AG04450 (cell line): ENCODE measurements at regions of chr7 and their contacts with region 1.

Region 1: GRCh38 chr7:24812310-24812945 is 55.2 kb upstream of the GSDME start:
- DNase-seq: no peak
- H3K4me3 ChIP-seq: no peak overlapping the region
- H3K27ac ChIP-seq: no peak overlapping the region
- H3K27me3 ChIP-seq: no peaks in the 10 kb centered on the region
- CTCF ChIP-seq: peak; percentile 90

Region 2: DNA sequence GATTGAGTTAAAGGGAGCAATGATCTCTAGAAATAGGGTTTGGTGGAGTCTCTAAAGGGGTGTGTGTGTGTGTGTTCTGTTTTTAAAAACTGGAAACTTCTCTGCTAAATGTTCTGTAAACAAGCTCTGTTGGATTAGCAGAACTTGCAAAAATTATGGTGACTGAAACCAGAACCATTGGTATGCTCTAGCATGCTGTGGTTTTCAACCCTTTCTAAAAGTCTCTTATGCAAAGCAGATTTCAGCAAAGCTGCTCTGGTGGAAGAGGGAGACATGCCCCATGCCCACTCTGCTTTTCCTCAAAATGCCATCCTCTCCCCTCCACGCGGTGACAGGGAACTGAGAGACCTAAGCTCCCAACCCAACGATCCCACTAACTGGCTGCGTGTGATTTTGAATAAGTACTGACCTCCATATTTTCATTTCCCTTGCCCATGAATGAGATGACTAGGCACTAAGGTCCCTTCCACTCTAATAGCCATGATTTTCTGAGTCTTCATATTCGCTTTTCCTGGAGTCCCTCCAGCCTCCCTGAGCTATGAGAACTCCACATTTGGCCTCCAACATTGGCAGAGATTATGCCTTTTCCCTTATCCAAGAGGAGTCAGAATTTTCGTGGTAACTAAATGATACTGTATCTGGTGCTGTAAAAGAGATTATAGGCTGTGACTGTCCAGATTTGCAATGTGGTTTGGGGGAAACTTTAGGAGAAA is 356.5 kb before region 1 on chr7:
- CTCF ChIA-PET with region 1: no interaction called
- POLR2A ChIA-PET with region 1: no interaction called
- DNase-seq: no peak
- H3K4me3 ChIP-seq: no peak overlapping the region
- H3K27ac ChIP-seq: no peak overlapping the region
- H3K27me3 ChIP-seq: peaks cover 2% of the 10 kb centered on the region
- CTCF ChIP-seq: no peak

Region 3: GRCh38 chr7:24572997-24573625 is 239.3 kb before region 1 on chr7 and contains the start of gene PALS2:
- CTCF ChIA-PET with region 1: interaction called, 12 read pairs
- POLR2A ChIA-PET with region 1: no interaction called
- DNase-seq: no peak
- H3K4me3 ChIP-seq: peak within 1 kb of the TSS; percentile 74
- H3K27ac ChIP-seq: no peak within 1 kb of the TSS
- H3K27me3 ChIP-seq: peaks cover 18% of the 10 kb centered on the region
- CTCF ChIP-seq: no peak
- polyA plus RNA-seq, gene PALS2: 9.2 and 11.6 TPM in 2 replicates

Region 4: GRCh38 chr7:24764972-24765744 is 47.3 kb before region 1 on chr7:
- CTCF ChIA-PET with region 1: interaction called, 15 read pairs
- POLR2A ChIA-PET with region 1: no interaction called
- DNase-seq: no peak
- H3K4me3 ChIP-seq: no peak overlapping the region
- H3K27ac ChIP-seq: no peak overlapping the region
- H3K27me3 ChIP-seq: no peaks in the 10 kb centered on the region
- CTCF ChIP-seq: no peak

Region 5: DNA sequence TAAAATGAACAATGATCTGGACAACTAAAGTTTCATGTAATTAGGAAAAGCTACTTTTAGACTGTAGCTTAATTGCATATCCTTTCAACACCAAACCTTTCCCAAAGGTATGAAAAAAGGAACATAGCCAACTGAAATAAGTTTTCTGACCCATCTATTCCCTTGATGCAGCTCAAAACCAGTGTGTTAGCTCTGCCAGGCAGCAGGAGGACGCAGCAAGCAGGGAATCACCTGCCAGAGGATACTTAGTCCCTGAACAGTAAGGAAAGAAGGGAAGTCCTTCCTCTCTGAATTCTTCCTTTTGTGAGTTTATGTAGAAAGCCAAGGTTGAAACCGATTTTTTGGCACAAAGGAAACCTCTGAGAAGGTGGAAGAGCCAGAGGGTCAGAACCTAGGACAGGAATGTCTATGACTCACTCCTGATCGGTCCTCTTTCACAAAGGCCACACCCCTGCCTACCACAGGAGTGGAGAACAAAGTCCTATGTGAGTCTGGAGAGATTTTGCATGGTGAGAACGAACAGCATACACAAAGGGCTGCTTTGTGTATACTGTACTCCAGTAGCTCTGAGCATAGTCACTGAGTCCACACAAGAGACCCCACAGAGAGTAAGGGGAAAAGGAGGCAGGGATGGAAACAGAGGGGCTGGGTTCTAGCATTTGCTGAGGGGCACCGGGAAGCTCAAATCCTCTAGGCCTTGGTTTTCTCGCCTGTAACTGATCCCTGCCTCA is 13.7 kb after region 1 on chr7:
- CTCF ChIA-PET with region 1: interaction called, 66 read pairs
- POLR2A ChIA-PET with region 1: no interaction called
- DNase-seq: no peak
- H3K4me3 ChIP-seq: no peak overlapping the region
- H3K27ac ChIP-seq: peak overlapping the region; percentile 34
- H3K27me3 ChIP-seq: no peaks in the 10 kb centered on the region
- CTCF ChIP-seq: no peak

Region 6: GRCh38 chr7:24948739-24949138 is 136.3 kb after region 1 on chr7:
- CTCF ChIA-PET with region 1: interaction called, 15 read pairs
- POLR2A ChIA-PET with region 1: no interaction called
- DNase-seq: no peak
- H3K4me3 ChIP-seq: no peak overlapping the region
- H3K27ac ChIP-seq: no peak overlapping the region
- H3K27me3 ChIP-seq: no peaks in the 10 kb centered on the region
- CTCF ChIP-seq: no peak

Region 7: GRCh38 chr7:25069900-25070443 is 257.5 kb after region 1 on chr7:
- CTCF ChIA-PET with region 1: interaction called, 120 read pairs
- POLR2A ChIA-PET with region 1: no interaction called
- DNase-seq: peak; percentile 56
- H3K4me3 ChIP-seq: no peak overlapping the region
- H3K27ac ChIP-seq: no peak overlapping the region
- H3K27me3 ChIP-seq: no peaks in the 10 kb centered on the region
- CTCF ChIP-seq: peak; percentile 87

Region 8: GRCh38 chr7:25389489-25390106 is 577.2 kb after region 1 on chr7:
- CTCF ChIA-PET with region 1: no interaction called
- POLR2A ChIA-PET with region 1: no interaction called
- DNase-seq: no peak
- H3K4me3 ChIP-seq: no peak overlapping the region
- H3K27ac ChIP-seq: no peak overlapping the region
- H3K27me3 ChIP-seq: peaks cover 12% of the 10 kb centered on the region
- CTCF ChIP-seq: peak; percentile 60